ENCODE measurements at regions of chr15 and their contacts with region 1.

Region 1: DNA sequence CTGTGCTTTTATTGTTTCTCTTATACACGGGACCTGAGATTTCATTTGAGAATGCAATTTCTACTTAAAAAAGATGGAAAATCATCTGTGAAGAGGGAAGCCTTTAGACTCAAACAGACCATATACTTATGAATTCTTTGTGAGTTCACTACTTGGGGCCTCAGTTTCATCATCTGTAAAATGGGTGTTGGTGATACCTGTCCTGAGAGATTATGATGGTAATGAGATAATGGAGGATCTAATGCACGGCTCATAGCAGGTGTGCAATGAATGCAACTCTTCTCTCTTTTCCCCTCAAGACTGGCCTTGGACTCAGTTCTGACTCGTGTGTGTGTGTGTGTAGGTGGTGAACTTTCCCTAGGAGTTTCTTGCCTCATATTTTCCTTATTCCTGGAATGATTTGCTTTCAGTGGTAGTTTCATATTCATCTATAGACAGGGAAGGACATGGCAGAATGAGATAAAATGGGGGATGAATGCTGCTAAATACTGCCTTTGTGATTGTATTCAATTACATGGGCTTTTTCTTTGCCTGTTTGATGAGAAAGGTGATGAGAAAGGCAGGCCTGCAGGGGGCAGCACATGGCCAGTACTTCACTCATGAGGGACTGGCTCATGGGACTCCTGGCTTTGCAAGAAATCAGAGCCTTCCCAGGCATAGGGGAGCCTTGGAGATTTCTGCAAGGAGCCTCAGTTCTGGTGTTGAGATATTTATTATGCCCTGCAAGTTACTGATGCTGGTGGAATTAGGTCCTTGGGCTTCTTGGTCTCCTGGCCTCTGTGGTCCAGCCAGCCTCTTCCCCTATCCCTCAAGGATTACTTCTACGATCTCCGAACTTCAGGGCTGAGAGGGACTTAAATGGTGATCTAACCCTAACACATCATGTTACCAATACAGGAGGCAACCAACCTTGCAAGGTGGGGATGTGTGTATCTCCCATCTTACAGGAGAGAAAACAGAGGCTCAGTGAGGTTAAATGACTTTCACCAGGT is 70.7 kb downstream of the RPLP1 start:
- DNase-seq: peak; percentile 99
- H3K4me3 ChIP-seq: no peak overlapping the region
- H3K4me1 ChIP-seq: peaks cover 43% of the 10 kb centered on the region
- H3K27me3 ChIP-seq: no peaks in the 10 kb centered on the region

Region 2: DNA sequence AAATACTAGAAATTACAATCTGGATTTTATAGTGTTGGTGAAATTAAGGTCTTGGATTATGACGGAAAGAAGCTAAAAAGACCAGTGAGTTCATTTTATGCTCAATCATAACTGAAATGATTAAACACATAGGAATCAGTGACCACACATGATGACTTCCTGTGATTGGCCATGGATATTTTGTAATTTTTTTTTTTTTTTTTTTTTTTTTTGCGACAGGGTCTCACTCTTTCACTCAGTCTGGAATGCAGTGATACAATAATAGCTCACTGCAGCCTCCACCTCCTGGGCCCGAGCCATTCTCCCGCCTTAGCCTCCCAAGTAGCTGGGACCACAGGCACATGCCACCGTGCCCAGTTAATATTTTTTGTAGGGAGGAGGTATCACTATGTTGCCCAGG is 177.2 kb before region 1 on chr15:
- in situ Hi-C with region 1: no loop called
- DNase-seq: no peak
- H3K4me3 ChIP-seq: no peak overlapping the region
- H3K4me1 ChIP-seq: peaks cover 27% of the 10 kb centered on the region
- H3K27me3 ChIP-seq: no peaks in the 10 kb centered on the region

Region 3: DNA sequence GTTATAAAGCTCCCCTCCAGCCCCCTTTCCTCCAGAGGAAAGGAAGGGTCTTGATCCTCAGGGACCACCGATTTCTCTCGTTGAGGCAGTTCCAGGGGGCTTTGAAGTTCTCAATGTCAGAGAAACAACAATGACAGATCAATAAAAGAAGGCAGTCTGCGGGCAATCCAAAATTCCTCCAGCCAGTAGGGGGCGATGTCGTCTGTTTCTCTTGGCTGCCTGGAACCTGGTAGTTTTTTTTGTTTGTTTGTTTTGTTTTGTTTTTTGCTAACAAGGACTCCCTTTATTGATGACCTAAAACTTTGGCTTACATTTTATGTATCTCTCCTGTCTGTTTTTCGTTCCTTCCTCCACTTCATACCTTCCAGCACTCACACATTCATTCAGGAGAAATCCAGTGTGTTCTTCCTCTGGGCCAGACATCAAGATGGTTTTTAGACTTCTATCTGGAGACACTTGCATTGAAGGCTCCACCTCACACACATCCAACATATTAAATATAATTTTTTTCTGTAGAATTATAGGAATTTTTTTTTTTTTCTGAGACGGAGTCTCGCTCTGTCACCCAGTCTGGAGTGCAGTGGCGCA is 205.9 kb after region 1 on chr15:
- in situ Hi-C with region 1: loop called (anchors 10 kb)
- DNase-seq: peak; percentile 25 to 86
- H3K4me3 ChIP-seq: no peak overlapping the region
- H3K4me1 ChIP-seq: no peaks in the 10 kb centered on the region
- H3K27me3 ChIP-seq: no peaks in the 10 kb centered on the region

Measured in HAP-1 (cell line).